Heart left ventricle (tissue), 16 donors: ENCODE measurements at regions of chr15 and their contacts with region 1.

Region 1: GRCh38 chr15:80309769-80310384 is 57.9 kb upstream of the CTXND1 start:
- DNase-seq: no peak
- ATAC-seq: peak in 3 of 4 donors; percentile 55 to 70 (median 57)
- H3K4me3 ChIP-seq: no peak overlapping the region
- H3K27ac ChIP-seq: no peak overlapping the region
- H3K4me1 ChIP-seq: no peaks in the 10 kb centered on the region
- H3K27me3 ChIP-seq: peaks cover 0 to 10% (median 0%) of the 10 kb centered on the region in 9 donors
- CTCF ChIP-seq: peak in 11 of 12 donors; percentile 28 to 59 (median 47)
- POLR2A ChIP-seq: no peak

Region 2: DNA sequence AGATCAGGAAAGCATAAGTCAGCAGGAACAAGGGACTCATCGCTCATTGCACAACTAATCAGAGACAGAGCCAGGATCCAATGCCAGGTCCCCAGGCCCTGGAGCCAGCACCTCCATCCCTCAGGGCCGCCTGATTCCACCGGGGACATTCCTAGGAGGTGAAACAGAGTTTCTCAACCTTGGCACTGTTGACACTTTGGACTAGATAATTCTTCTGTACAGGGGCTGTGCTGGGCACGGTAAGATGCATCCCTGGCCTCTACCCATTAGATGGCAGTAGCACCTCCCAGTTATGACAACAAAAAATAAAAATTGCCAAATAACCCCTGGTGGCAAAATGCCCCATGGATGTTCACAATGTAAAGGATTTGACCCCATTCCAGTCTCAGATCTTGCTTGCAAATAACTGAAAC is 540.8 kb before region 1 on chr15:
- intact Hi-C with region 1: loop called in 1 of 10 experiments (anchors 10 kb)
- DNase-seq: no peak
- ATAC-seq: no peak
- H3K4me3 ChIP-seq: no peak overlapping the region
- H3K27ac ChIP-seq: no peak overlapping the region
- H3K4me1 ChIP-seq: no peaks in the 10 kb centered on the region
- H3K27me3 ChIP-seq: peaks cover 0 to 4% (median 0%) of the 10 kb centered on the region in 9 donors
- CTCF ChIP-seq: peak in 8 of 12 donors; percentile 13 to 38 (median 25)
- POLR2A ChIP-seq: no peak

Region 3: DNA sequence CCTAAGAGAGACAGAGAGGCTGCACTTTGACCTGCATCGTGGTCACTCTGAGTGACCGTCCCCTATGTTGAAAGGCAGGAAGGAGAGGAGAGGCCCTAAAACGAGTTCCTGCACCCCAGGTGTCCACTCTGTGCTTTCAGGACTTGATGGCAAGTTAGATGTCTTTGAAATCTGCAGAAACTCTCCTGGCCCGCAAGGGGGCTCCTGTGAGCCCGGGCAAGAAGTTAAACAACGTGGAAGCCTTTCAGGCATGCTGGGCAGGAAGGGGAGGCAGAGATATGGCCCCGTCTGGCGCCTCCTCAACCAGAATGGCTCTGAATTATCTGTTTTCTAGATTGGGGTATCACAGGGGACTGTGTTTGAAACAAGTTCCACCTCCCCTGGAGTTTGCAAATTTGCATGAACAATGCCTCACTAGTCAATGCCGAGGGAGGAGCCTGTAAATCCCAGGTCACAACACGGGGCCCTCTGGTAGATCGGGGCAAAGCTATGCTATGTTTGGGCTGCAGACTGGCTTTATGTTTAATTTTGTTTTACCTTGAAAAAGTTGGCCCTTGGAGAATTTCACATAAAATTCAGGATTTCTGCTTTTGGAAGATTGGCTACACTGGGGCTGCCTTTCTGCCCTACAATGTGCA is 67.6 kb before region 1 on chr15:
- intact Hi-C with region 1: loop called in 8 of 10 experiments (anchors 2 to 5 kb)
- DNase-seq: peak in 3 of 5 donors; percentile 37 to 64 (median 40)
- ATAC-seq: peak in 2 of 4 donors; percentile 41 to 50
- H3K4me3 ChIP-seq: no peak overlapping the region
- H3K27ac ChIP-seq: no peak overlapping the region
- H3K4me1 ChIP-seq: peaks cover 0 to 9% (median 0%) of the 10 kb centered on the region in 12 donors
- H3K27me3 ChIP-seq: peaks cover 0 to 18% (median 3%) of the 10 kb centered on the region in 9 donors
- CTCF ChIP-seq: peak; percentile 37 to 67 (median 55)
- POLR2A ChIP-seq: no peak